Naive thymus-derived CD4-positive, alpha-beta T cell (primary cell): ENCODE measurements at regions of chr2 and their contacts with region 1.

Region 1: GRCh38 chr2:205776139-205776538 is 93.8 kb downstream of the NRP2 start:
- DNase-seq: peak in 1 of 9 donors; percentile 52
- ATAC-seq: no peak
- H3K4me3 ChIP-seq: no peak overlapping the region
- H3K4me3 Mint-ChIP-seq: no peak overlapping the region
- H3K27ac ChIP-seq: no peak overlapping the region
- H3K27ac Mint-ChIP-seq: no peak overlapping the region
- H3K4me1 ChIP-seq: peaks cover 0 to 4% of the 10 kb centered on the region in 2 donors
- H3K4me1 Mint-ChIP-seq: peaks cover 4 to 9% (median 6%) of the 10 kb centered on the region in 7 donors
- H3K27me3 ChIP-seq: no peaks in the 10 kb centered on the region
- H3K27me3 Mint-ChIP-seq: peaks cover 13 to 34% (median 27%) of the 10 kb centered on the region in 5 donors

Region 2: DNA sequence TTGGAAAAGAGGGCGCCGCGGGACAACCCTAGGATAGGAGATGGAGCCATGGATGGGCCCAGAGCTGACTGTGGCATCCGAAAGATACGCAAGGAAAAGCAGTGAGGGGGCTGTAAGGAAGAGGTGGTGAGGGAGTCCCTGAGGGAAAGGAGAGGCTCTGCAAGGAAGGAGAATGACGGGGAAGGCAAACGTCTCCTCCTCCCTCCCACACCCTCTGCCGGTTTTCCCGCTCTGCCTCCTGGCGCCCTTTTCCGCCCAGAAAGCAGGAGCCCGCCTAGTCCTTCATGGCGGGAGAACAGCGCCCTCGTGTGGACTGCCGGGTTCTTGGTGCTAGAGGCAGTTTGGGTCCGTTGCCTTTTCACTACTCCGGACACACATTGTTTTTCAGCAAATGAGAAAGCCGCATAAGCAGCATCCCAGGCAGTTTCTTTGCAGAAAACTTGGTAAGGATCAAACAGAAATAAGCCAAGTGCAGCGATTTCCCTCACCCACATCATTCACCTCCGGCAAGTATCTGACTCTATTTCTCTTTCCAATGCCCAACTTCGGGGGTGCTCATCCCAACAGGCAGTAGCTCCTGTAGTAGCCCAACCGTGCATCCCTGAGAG is 109.5 kb after region 1 on chr2:
- CTCF ChIA-PET with region 1: no interaction called
- POLR2A ChIA-PET with region 1: no interaction called
- intact Hi-C with region 1: loop called in 1 of 2 experiments (anchors 1 kb)
- DNase-seq: peak in 8 of 9 donors; percentile 6 to 76 (median 30)
- ATAC-seq: no peak
- H3K4me3 ChIP-seq: no peak overlapping the region
- H3K4me3 Mint-ChIP-seq: no peak overlapping the region
- H3K27ac ChIP-seq: no peak overlapping the region
- H3K27ac Mint-ChIP-seq: no peak overlapping the region
- H3K4me1 ChIP-seq: no peaks in the 10 kb centered on the region
- H3K4me1 Mint-ChIP-seq: peaks cover 0 to 6% (median 0%) of the 10 kb centered on the region in 7 donors
- H3K27me3 ChIP-seq: no peaks in the 10 kb centered on the region
- H3K27me3 Mint-ChIP-seq: peaks cover 14 to 40% (median 24%) of the 10 kb centered on the region in 5 donors

Region 3: DNA sequence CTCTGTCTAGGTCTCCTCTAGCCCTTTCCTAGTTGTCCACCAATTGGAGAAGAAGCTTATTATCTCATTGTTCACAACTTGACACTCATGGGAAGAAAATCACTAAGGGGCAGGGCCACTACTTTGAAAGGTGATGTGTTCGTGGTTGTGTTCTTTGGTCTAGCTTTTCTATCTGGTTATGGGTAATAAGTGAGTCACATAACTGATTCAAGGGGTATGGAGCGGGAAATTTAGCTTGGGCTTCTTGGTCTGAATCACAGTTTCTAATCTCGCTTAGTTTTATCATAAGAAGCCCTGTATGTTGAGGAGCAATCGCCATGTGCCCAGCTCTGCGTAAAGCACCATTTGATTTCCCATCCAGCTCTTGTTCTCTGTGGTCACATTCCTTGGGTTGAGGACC is 960.8 kb after region 1 on chr2:
- CTCF ChIA-PET with region 1: no interaction called
- POLR2A ChIA-PET with region 1: no interaction called
- intact Hi-C with region 1: no loop called
- DNase-seq: no peak
- ATAC-seq: no peak
- H3K4me3 ChIP-seq: no peak overlapping the region
- H3K4me3 Mint-ChIP-seq: no peak overlapping the region
- H3K27ac ChIP-seq: no peak overlapping the region
- H3K27ac Mint-ChIP-seq: no peak overlapping the region
- H3K4me1 ChIP-seq: no peaks in the 10 kb centered on the region
- H3K4me1 Mint-ChIP-seq: no peaks in the 10 kb centered on the region
- H3K27me3 ChIP-seq: no peaks in the 10 kb centered on the region
- H3K27me3 Mint-ChIP-seq: peaks cover 0 to 15% (median 7%) of the 10 kb centered on the region in 5 donors

Region 4: GRCh38 chr2:207529330-207530159 is 1753.4 kb after region 1 on chr2 and contains the start of gene CREB1:
- CTCF ChIA-PET with region 1: no interaction called
- POLR2A ChIA-PET with region 1: no interaction called
- intact Hi-C with region 1: no loop called
- DNase-seq: peak; percentile 99 to 100 (median 100)
- ATAC-seq: peak; percentile 87
- H3K4me3 ChIP-seq: peak within 1 kb of the TSS; percentile 75
- H3K4me3 Mint-ChIP-seq: peak within 1 kb of the TSS; percentile 95 to 100 (median 99)
- H3K27ac ChIP-seq: peak within 1 kb of the TSS; percentile 100
- H3K27ac Mint-ChIP-seq: peak within 1 kb of the TSS; percentile 98 to 100 (median 100)
- H3K4me1 ChIP-seq: peaks cover 52 to 59% of the 10 kb centered on the region in 2 donors
- H3K4me1 Mint-ChIP-seq: peaks cover 45 to 85% (median 69%) of the 10 kb centered on the region in 7 donors
- H3K27me3 ChIP-seq: no peaks in the 10 kb centered on the region
- H3K27me3 Mint-ChIP-seq: peaks cover 0 to 7% (median 0%) of the 10 kb centered on the region in 5 donors
- total RNA-seq, gene CREB1: 89.7 to 141 (median 115) TPM